PC-9 (cell line): ENCODE measurements at regions of chr3 and their contacts with region 1.

Region 1: DNA sequence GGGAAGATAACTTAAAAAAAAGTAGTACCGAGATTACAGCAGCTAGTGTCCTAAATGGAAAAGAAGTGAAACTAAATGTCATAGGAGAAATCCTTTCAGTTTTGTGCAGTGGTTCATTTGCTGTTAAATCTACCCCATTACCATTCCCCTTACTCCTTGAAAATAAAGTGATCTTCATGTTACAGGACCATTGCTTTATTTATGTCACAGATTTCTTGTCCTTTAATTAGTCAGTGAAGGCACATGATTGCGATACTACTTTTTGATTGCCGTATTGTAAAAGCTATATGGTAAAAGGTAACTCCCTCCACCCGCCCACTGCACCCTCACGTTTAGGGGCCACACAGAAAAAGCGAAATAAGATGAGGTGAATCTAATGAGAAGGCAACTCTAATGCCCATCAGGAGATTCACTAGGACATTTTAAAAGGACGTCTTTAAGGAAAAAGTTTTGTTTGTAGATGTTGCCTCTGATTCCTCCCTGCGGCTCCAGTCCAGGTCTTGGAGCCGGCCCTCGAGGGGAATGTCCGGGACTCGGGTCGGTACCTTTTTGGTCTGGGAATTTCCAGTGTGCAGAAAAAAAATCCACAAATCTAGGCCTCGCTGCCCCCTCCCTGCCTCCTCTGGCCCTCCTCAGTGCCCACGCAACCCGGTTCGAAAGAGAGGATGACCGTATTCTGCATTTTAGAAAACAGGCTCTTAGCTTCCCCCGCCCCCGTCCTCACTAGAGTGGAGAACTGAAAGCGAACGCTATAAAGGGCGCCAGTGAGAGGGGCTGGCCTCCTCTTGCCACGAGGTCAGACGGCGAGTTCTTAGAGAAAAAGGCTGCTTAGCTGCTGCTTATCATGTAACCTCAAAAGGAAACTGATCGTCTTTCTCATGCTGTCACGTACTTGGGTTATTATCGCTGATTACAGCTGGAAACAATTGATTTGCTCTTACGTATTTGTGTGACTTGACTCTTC is 21.8 kb upstream of the NFKBIZ start:
- DNase-seq: peak; percentile 67 to 73
- H3K4me3 ChIP-seq: peak overlapping the region; percentile 74
- H3K27ac ChIP-seq: peak overlapping the region; percentile 56
- H3K4me1 ChIP-seq: peaks cover 23% of the 10 kb centered on the region
- H3K27me3 ChIP-seq: no peaks in the 10 kb centered on the region
- CTCF ChIP-seq: no peak

Region 2: GRCh38 chr3:101842245-101842934 is 14.9 kb after region 1 on chr3:
- CTCF ChIA-PET with region 1: no interaction called
- POLR2A ChIA-PET with region 1: interaction called, 11 read pairs
- intact Hi-C with region 1: no loop called
- DNase-seq: no peak
- H3K4me3 ChIP-seq: no peak overlapping the region
- H3K27ac ChIP-seq: no peak overlapping the region
- H3K4me1 ChIP-seq: no peaks in the 10 kb centered on the region
- H3K27me3 ChIP-seq: no peaks in the 10 kb centered on the region
- CTCF ChIP-seq: no peak